RWPE1 (cell line): ENCODE measurements at regions of chr9 and their contacts with region 1.

Region 1: DNA sequence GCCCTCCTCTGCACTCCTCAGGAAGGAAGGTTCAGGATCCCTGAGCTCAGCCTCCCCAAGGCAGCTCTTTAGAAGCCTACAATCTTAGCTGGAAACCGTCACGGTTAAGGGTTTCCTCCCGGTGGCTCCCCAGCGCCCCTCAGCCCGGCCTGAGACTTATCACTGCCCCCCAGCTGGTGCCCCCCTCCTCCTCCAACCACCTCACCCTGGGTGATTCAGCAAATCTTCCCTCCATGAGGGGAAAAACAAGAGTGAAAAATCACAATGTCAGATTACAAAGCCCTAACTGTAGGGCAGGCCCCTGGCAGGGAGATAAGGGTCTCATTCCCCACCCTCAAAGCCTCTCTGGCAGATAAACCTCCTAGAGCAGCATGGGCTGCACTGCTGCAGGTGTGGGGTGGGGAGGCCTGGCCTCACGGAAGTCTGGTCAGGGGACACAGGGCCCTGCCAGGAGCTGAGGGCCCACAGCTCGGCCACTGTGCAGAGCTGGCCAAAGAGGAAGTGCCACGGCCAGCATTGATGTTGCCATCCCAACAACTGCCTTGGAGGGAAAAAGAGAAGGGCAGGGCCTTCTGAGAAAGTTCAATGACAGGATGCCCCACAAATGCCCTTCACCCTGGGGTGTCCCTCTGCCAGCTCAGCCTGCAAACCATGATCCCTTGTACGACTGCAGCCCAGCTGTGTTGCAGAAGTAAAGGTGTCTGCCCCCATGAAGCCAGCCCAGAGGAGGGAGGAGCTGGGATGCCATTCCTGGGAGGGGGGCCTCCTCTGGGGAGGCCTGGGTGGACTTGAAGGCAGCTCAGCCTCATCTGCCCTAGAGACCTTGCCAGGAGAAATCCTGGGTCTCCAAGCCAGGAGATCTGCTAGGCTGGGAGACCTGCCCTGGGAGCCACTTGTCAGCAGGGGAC is 25.9 kb downstream of the GFI1B start:
- DNase-seq: no peak
- H3K27ac ChIP-seq: no peak overlapping the region
- CTCF ChIP-seq: no peak

Region 2: GRCh38 chr9:132991351-132992300 is 12.7 kb before region 1 on chr9:
- CTCF ChIA-PET with region 1: no interaction called
- POLR2A ChIA-PET with region 1: no interaction called
- DNase-seq: no peak
- H3K27ac ChIP-seq: no peak overlapping the region
- CTCF ChIP-seq: no peak

Region 3: GRCh38 chr9:133023117-133023890 is 19.0 kb after region 1 on chr9:
- CTCF ChIA-PET with region 1: interaction called, 11 read pairs
- POLR2A ChIA-PET with region 1: no interaction called
- DNase-seq: no peak
- H3K27ac ChIP-seq: no peak overlapping the region
- CTCF ChIP-seq: no peak